MCF 10A (cell line): ENCODE measurements at regions of chr9 and their contacts with region 1.

Region 1: GRCh38 chr9:6305954-6306563 is 22.1 kb upstream of the TPD52L3 start:
- DNase-seq: peak; percentile 59
- H3K4me3 Mint-ChIP-seq: no peak overlapping the region
- H3K27ac Mint-ChIP-seq: no peak overlapping the region
- H3K4me1 Mint-ChIP-seq: no peaks in the 10 kb centered on the region
- H3K27me3 Mint-ChIP-seq: no peaks in the 10 kb centered on the region
- CTCF ChIP-seq: peak; percentile 61

Region 2: GRCh38 chr9:5052838-5053237 is 1253.2 kb before region 1 on chr9:
- CTCF ChIA-PET with region 1: no interaction called
- POLR2A ChIA-PET with region 1: no interaction called
- intact Hi-C with region 1: no loop called
- DNase-seq: no peak
- H3K4me3 Mint-ChIP-seq: no peak overlapping the region
- H3K27ac Mint-ChIP-seq: no peak overlapping the region
- H3K4me1 Mint-ChIP-seq: no peaks in the 10 kb centered on the region
- H3K27me3 Mint-ChIP-seq: no peaks in the 10 kb centered on the region
- CTCF ChIP-seq: no peak

Region 3: DNA sequence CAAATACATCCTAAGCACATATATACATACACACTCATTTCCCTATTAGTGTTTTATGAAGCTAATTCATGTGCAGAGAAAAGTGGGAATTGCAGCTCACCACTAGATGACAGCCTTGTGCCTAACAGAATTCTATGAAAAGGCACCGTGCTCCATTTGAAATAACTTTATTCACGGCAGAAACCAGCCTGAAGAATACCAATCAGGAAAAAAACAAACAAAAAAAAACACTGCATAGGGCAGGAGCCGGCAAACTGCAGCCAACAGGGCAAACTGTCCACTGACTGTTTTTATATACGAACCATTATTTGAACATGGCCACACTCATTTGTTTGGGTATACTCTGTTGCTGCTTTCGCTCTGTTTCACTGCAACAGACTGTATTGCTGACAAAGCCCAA is 506.7 kb before region 1 on chr9:
- CTCF ChIA-PET with region 1: interaction called, 4 read pairs
- POLR2A ChIA-PET with region 1: no interaction called
- intact Hi-C with region 1: loop called (anchors 2 kb)
- DNase-seq: peak; percentile 55
- H3K4me3 Mint-ChIP-seq: no peak overlapping the region
- H3K27ac Mint-ChIP-seq: no peak overlapping the region
- H3K4me1 Mint-ChIP-seq: peaks cover 6% of the 10 kb centered on the region
- H3K27me3 Mint-ChIP-seq: no peaks in the 10 kb centered on the region
- CTCF ChIP-seq: peak; percentile 70

Region 4: GRCh38 chr9:5958273-5958672 is 347.8 kb before region 1 on chr9:
- CTCF ChIA-PET with region 1: no interaction called
- POLR2A ChIA-PET with region 1: no interaction called
- intact Hi-C with region 1: no loop called
- DNase-seq: no peak
- H3K4me3 Mint-ChIP-seq: no peak overlapping the region
- H3K27ac Mint-ChIP-seq: no peak overlapping the region
- H3K4me1 Mint-ChIP-seq: no peaks in the 10 kb centered on the region
- H3K27me3 Mint-ChIP-seq: no peaks in the 10 kb centered on the region
- CTCF ChIP-seq: no peak

Region 5: GRCh38 chr9:6055213-6055612 is 250.8 kb before region 1 on chr9:
- CTCF ChIA-PET with region 1: interaction called, 141 read pairs
- POLR2A ChIA-PET with region 1: interaction called, 12 read pairs
- intact Hi-C with region 1: loop called (anchors 1 kb)
- DNase-seq: peak; percentile 93
- H3K4me3 Mint-ChIP-seq: no peak overlapping the region
- H3K27ac Mint-ChIP-seq: no peak overlapping the region
- H3K4me1 Mint-ChIP-seq: peaks cover 11% of the 10 kb centered on the region
- H3K27me3 Mint-ChIP-seq: no peaks in the 10 kb centered on the region
- CTCF ChIP-seq: peak; percentile 72

Region 6: GRCh38 chr9:6106576-6107339 is 199.3 kb before region 1 on chr9:
- CTCF ChIA-PET with region 1: interaction called, 33 read pairs
- POLR2A ChIA-PET with region 1: no interaction called
- intact Hi-C with region 1: no loop called
- DNase-seq: peak; percentile 61
- H3K4me3 Mint-ChIP-seq: no peak overlapping the region
- H3K27ac Mint-ChIP-seq: no peak overlapping the region
- H3K4me1 Mint-ChIP-seq: peaks cover 35% of the 10 kb centered on the region
- H3K27me3 Mint-ChIP-seq: no peaks in the 10 kb centered on the region
- CTCF ChIP-seq: peak; percentile 40

Region 7: DNA sequence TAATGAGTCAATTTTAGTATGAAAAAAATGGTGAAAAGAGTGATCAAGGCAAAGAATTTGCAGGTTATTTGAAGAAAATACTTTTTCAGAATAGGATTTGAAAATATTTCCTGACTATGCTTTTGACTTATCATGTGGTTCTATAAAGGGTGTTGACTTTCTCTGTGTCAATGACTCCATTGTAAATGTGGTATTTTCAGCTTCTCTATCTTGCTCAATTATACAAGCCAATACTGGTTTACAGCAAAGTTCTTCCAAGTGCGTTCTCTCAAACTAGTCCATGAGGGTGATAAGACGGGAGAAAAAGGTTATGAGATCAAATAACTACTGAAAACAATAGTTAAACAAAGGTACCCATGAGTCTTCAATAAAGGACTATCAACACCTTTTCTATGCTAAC is 68.8 kb before region 1 on chr9:
- CTCF ChIA-PET with region 1: interaction called, 15 read pairs
- POLR2A ChIA-PET with region 1: no interaction called
- intact Hi-C with region 1: no loop called
- DNase-seq: no peak
- H3K4me3 Mint-ChIP-seq: no peak overlapping the region
- H3K27ac Mint-ChIP-seq: no peak overlapping the region
- H3K4me1 Mint-ChIP-seq: peaks cover 17% of the 10 kb centered on the region
- H3K27me3 Mint-ChIP-seq: no peaks in the 10 kb centered on the region
- CTCF ChIP-seq: no peak

Region 8: GRCh38 chr9:6328103-6328502 is 22.0 kb after region 1 on chr9 and contains the start of gene TPD52L3:
- CTCF ChIA-PET with region 1: interaction called, 10 read pairs
- POLR2A ChIA-PET with region 1: no interaction called
- intact Hi-C with region 1: no loop called
- DNase-seq: no peak
- H3K4me3 Mint-ChIP-seq: no peak within 1 kb of the TSS
- H3K27ac Mint-ChIP-seq: no peak within 1 kb of the TSS
- H3K4me1 Mint-ChIP-seq: no peaks in the 10 kb centered on the region
- H3K27me3 Mint-ChIP-seq: no peaks in the 10 kb centered on the region
- CTCF ChIP-seq: no peak
- total RNA-seq, gene TPD52L3: not detected in 2 replicates

Region 9: DNA sequence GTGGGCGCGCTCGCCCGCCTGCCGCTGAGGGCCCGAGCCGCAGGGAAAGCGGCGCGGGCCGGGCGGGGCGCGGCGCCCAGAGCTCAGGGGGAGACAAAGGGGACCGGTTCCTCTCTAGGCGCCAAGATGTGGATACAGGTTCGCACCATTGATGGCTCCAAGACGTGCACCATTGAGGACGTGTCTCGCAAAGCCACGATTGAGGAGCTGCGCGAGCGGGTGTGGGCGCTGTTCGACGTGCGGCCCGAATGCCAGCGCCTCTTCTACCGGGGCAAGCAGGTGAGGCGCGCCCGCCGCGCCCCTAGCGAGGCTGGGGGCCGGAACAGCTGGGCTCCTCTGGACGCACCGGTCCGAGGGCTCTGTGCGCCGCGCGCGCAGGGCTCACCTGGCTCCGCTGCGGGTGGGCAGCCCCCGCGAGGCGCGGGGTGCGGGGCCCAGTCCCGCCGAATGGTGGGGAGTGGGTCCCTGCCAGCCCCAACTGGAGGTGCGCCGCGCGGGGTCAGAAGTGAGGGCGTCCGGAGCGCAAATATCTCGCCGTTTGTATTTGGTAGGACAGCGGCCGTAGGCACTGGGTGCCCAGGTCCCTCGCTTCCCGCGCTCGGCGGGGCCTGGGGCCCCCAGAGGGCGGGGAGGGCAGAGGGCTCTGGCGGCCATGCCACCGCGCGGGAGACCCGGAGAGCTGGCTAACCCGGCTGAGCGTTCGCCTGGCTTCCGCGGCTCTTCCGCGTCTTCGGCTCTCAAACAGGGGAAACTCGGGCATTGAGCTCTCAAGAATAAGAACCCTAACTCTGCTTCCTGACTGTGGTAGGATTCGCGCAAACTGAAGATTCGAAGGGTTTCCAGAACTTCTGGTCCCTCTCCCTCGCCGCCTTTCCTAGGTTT is 107.5 kb after region 1 on chr9:
- CTCF ChIA-PET with region 1: no interaction called
- POLR2A ChIA-PET with region 1: no interaction called
- intact Hi-C with region 1: no loop called
- DNase-seq: peak; percentile 35
- H3K4me3 Mint-ChIP-seq: peak overlapping the region; percentile 81
- H3K27ac Mint-ChIP-seq: peak overlapping the region; percentile 87
- H3K4me1 Mint-ChIP-seq: peaks cover 24% of the 10 kb centered on the region
- H3K27me3 Mint-ChIP-seq: no peaks in the 10 kb centered on the region
- CTCF ChIP-seq: no peak

Region 10: GRCh38 chr9:6575324-6576034 is 269.4 kb after region 1 on chr9:
- CTCF ChIA-PET with region 1: no interaction called
- POLR2A ChIA-PET with region 1: no interaction called
- intact Hi-C with region 1: no loop called
- DNase-seq: no peak
- H3K4me3 Mint-ChIP-seq: no peak overlapping the region
- H3K27ac Mint-ChIP-seq: no peak overlapping the region
- H3K4me1 Mint-ChIP-seq: no peaks in the 10 kb centered on the region
- H3K27me3 Mint-ChIP-seq: no peaks in the 10 kb centered on the region
- CTCF ChIP-seq: no peak